Sciatic nerve (tissue), 2 donors: ENCODE measurements at regions of chr9 and their contacts with region 1.

Region 1: GRCh38 chr9:127943731-127944144 is 6.1 kb upstream of the DPM2 start:
- DNase-seq: peak; percentile 94
- ATAC-seq: peak; percentile 86

Region 2: GRCh38 chr9:127092041-127092608 is 851.6 kb before region 1 on chr9:
- intact Hi-C with region 1: no loop called
- DNase-seq: no peak
- ATAC-seq: no peak

Region 3: DNA sequence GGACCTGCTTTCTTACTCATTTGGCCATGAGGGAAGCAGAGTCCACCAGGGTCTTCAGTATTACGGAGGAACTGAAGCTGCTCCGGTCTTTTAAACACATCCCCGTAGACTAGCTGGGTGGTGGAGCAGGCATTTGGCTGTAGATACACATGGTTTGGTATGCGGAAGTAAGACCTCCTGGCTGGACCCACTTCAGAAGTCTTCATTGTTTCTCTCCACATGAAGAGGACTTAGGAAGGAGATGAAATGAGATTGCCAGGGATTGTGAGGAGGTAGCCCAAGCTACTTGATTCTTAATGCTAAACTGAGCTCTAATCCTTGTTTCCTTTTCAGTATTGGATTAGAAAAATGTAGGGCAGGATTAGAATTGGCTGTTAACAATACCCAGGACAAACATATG is 298.8 kb before region 1 on chr9:
- intact Hi-C with region 1: no loop called
- DNase-seq: no peak
- ATAC-seq: no peak

Region 4: GRCh38 chr9:127980706-127981558 is 37.2 kb after region 1 on chr9 and contains the start of gene EEIG1:
- intact Hi-C with region 1: loop called (anchors 5 kb)
- DNase-seq: peak; percentile 98
- ATAC-seq: peak; percentile 94
- total RNA-seq, gene EEIG1: 96.8 TPM

Region 5: DNA sequence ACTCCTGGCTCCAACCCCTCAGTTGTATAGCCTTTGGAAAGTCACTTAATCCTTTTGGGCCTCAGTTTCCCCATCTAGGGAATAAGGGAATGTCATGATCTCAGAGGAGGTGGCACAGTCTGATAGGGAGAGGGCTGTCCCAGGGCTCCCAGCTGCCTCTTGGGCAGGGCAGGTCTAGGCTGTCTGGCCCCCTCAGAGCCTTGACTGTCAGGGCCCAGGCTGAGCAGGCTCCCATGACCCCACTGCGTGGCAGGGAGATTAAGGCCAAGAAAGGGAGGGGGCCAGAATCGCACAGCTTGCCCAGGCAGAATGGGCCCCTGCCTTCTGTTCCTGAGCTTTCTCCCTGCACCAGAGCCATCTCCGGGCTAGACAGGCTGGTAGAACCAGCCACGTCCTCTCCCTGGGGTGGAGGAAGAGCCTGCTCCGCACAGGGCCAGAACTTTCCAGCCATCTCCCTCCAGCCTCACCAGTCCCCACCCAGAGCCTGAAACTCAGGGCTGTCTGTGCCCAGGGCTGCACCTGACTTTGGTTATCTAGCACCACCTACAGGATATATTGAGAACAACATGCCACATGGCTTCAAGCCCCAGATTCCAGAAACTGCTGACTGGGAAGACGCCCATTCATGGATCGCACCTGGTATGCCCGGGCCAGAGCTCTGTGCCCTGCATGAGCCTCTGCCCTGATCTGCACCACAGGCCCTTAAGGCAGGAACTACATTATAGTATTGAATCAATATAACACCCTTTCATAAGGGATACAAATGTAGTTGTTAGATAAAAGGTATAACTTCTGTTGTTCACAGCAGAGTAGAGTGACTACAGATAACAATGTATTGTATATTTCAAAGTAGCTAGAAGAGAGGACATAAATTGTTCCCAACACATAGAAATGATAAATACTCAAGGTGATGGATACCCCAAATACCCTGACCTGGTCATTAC is 91.4 kb after region 1 on chr9:
- intact Hi-C with region 1: loop called (anchors 5 kb)
- DNase-seq: peak; percentile 79
- ATAC-seq: peak; percentile 96

Region 6: DNA sequence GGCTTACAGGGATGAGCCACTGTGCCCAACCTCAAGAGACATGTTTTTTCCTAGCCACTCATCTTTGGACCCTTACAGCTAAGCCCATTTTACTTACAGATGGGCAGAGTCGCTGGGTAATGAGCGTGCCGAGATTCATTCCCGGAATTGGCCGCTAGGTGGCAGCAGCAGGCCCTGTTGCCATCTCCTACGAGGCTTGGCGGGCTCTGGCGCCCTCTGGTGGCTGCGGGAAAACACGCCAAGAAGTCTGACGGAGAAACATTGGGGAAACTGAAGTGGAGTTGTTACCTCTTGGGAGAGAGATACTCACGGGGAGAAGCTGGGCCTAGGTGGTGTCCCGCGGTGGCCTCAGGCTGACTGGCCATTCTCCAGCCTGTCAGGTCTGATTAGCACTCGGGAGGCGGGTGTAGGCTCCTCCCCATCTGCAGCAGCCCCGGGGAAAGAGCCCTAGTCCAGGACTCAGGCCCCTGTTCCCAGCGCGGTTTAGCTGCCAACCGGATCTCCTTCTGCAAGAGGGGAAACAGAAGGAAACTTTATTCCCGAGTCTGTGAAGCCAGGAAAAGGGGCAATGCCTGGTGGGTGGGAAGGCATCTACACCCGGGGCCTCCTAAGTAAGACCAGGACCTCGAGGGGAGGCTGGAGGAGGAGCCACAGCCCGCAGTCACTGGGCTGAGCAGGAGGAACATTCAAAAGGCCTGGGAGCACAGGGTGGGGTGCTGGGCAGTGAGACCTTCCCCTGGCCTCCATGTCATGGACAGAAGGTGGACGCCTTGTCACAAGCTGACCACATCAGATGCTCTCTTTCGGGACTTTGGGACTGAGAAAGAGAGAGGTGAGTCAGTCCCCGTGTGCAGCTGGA is 174.1 kb after region 1 on chr9:
- intact Hi-C with region 1: loop called (anchors 5 kb)
- DNase-seq: peak; percentile 98
- ATAC-seq: peak; percentile 76